Left cardiac atrium (tissue), 4 donors: ENCODE measurements at regions of chrX and their contacts with region 1.

Region 1: GRCh38 chrX:115284877-115285276 is 4.6 kb upstream of the LUZP4 start:
- DNase-seq: no peak
- ATAC-seq: no peak

Region 2: DNA sequence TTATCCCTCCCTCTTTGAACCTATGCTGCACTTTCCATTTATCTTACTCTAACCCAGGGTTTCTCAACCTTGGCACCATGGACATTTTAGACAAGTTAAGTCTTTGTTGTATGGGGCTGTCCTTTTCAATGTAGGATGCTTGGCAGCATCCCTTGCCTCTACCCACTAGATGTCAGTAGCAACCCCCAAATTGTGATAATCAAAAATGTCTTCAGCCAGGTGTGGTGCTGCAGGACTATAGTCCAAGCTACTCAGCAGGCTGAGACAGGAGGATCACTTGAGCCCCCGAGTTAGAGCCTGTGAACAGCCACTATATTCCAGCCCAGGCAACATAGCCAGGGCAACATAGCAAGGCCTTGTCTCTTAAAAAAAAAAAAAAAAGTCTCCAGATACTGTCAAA is 57.9 kb before region 1 on chrX:
- intact Hi-C with region 1: loop called in 1 of 2 experiments (anchors 10 kb)
- DNase-seq: no peak
- ATAC-seq: no peak